ENCODE measurements at regions of chr1 and their contacts with region 1.

Region 1: DNA sequence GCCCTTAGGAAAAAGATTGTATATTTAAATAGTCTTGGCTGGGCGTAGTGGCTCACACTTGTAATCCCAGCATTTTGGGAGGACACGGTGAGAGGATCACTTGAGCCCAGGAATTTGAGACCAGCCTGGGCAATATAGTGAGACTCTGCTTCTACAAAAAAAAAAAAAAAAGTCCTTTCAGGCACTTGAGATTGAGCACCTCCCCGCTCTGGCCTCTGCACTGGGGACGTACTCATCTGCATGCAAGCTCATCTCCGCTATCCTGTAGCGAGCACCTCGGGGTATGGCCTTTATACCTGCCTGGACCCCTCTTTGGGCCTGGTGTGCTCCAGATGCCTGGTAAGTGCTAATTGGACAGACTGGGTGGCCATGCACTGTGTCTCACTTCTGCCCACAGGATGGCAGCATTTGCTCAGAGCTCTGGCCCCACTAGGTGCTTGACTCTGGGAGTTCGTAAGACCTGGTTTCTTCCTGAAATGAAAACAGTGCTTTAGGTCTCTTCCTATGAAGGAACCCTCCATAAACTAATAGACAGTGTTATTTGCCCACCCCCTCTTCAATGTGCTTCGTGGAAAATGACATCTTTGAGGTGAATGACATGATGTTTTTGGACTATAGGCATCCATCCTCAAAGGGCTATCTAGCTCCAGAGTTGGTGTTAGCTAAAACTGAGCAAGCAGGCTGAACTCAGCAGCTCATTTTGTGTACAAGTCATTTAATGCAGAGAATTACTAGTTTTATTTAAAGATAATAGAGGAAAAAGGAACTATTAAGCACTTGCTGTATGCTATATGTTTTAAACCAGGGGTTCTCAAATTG is 61.7 kb upstream of the ADAR start:
- DNase-seq: peak; percentile 67
- ATAC-seq: peak; percentile 100
- H3K4me3 ChIP-seq: no peak overlapping the region
- H3K27ac ChIP-seq: no peak overlapping the region
- H3K4me1 ChIP-seq: no peaks in the 10 kb centered on the region
- H3K27me3 ChIP-seq: no peaks in the 10 kb centered on the region
- CTCF ChIP-seq: peak; percentile 90 to 96 (median 93); a peak in 5 of 6 replicates
- EP300 ChIP-seq: no peak
- POLR2A ChIP-seq: no peak
- RAD21 ChIP-seq: peak; percentile 98

Region 2: GRCh38 chr1:154607609-154608396 is 61.9 kb before region 1 on chr1 and contains the start of gene ADAR:
- CTCF ChIA-PET with region 1: interaction called, 5 read pairs
- POLR2A ChIA-PET with region 1: interaction called, 3 read pairs
- RAD21 ChIA-PET with region 1: interaction called, 11 read pairs
- SMC1A ChIA-PET with region 1: interaction called, 6 read pairs
- in situ Hi-C with region 1: no loop called
- intact Hi-C with region 1: no loop called
- DNase-seq: peak; percentile 89
- ATAC-seq: peak; percentile 74
- H3K4me3 ChIP-seq: peak within 1 kb of the TSS; percentile 80
- H3K27ac ChIP-seq: peak within 1 kb of the TSS; percentile 100
- H3K4me1 ChIP-seq: peaks cover 47% of the 10 kb centered on the region
- H3K27me3 ChIP-seq: no peaks in the 10 kb centered on the region
- CTCF ChIP-seq: 0 out of 6 replicates have a peak, but pooled peaks of 2 of the 3 experiments have one; percentile 4 to 5
- EP300 ChIP-seq: 0 out of 4 replicates have a peak, but pooled peaks of 1 of the 2 experiments have one; percentile 16
- POLR2A ChIP-seq: peak; percentile 84
- RAD21 ChIP-seq: no peak
- polyA plus RNA-seq, gene ADAR: 55.5 to 105 TPM

Region 3: DNA sequence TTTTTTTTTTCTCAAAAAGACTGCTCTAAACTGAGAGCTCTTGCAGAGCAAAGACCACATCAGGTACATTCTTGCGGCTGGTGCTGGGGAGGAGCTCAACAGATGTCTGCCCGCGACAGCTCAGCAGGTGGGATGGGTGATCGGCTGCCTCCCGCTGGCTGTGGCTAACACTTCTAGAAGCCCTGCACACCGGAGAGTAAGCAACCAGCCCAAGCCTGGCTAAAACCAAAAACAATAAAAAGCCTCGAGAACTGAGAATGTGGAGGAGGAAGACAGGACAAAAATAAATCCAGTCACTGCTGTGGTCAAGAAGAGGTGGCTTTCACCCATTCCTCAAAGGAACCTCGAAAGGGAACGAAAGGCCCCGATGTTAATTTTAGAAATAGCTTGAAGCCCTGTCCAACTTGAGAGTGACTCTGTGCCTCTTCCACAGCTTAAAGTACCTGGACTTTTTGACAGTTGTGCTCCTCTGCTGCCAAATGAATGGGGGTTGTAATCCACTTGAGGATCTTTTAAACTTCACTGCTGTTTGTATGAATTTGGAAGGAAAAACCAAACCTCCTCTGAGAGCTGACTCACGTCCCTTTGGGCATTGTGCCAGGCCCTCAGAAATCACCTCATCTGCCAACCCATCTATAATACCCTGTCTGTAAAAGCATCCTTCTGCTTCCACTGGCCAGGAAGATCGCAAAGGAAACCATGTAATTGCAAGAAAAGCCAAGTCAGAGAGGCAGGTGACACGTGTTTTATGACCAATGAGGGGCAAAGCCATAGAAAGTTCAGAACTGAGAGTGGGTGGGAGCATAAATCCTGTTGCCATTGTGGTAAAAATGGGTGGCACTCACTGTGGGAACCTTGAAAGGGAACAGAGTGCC is 121.9 kb after region 1 on chr1:
- CTCF ChIA-PET with region 1: interaction called, 4 read pairs
- POLR2A ChIA-PET with region 1: no interaction called
- RAD21 ChIA-PET with region 1: interaction called, 11 read pairs
- SMC1A ChIA-PET with region 1: interaction called, 4 read pairs
- in situ Hi-C with region 1: no loop called
- intact Hi-C with region 1: no loop called
- DNase-seq: peak; percentile 88
- ATAC-seq: peak; percentile 97
- H3K4me3 ChIP-seq: peak overlapping the region; percentile 49; the same call in 1 of the 2 replicates
- H3K27ac ChIP-seq: peak overlapping the region; percentile 59
- H3K4me1 ChIP-seq: peaks cover 39% of the 10 kb centered on the region
- H3K27me3 ChIP-seq: no peaks in the 10 kb centered on the region
- CTCF ChIP-seq: peak; percentile 39 to 41 (median 40)
- EP300 ChIP-seq: peak; percentile 76 to 77
- POLR2A ChIP-seq: no peak
- RAD21 ChIP-seq: peak; percentile 48

Region 4: DNA sequence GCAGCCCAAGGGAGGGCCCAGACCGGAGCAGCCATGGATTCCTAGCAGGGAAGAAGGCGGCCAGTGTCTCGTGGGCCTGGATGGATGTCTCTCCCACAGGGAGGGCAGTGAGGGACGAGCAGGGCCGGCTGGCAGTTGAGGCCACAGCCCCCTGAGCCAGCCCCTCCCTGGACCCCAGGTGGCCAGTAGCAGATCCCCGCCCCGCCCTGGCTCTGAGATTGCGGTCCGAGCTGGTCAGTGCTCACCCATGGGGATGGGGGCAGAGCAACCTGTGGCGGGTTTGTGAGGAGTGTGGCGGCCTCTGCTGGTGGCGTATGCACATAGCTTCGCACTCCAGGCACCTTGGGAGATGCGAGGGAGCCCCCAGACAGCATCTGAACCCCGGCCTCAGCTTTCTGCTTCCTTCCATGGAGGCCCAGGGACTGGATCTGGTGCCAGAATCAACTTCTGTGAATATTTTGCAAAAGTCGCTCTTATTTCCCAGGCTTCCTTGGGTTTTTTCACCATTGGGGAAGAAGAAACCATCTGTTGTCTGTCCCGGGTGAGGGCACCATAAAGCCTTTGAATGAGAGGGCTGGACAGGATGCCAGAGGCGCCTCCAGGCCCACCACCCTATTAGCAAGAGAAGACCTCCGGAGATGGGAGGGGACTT is 208.8 kb after region 1 on chr1:
- CTCF ChIA-PET with region 1: interaction called, 137 read pairs
- POLR2A ChIA-PET with region 1: interaction called, 6 read pairs
- RAD21 ChIA-PET with region 1: interaction called, 51 read pairs
- SMC1A ChIA-PET with region 1: interaction called, 113 read pairs
- in situ Hi-C with region 1: loop called (anchors 5 kb)
- intact Hi-C with region 1: loop called (anchors 1 kb)
- DNase-seq: no peak
- ATAC-seq: peak; percentile 94
- H3K4me3 ChIP-seq: no peak overlapping the region
- H3K27ac ChIP-seq: no peak overlapping the region
- H3K4me1 ChIP-seq: peaks cover 10% of the 10 kb centered on the region
- H3K27me3 ChIP-seq: no peaks in the 10 kb centered on the region
- CTCF ChIP-seq: peak; percentile 92 to 97 (median 94)
- EP300 ChIP-seq: no peak
- POLR2A ChIP-seq: no peak
- RAD21 ChIP-seq: peak; percentile 96

Region 5: DNA sequence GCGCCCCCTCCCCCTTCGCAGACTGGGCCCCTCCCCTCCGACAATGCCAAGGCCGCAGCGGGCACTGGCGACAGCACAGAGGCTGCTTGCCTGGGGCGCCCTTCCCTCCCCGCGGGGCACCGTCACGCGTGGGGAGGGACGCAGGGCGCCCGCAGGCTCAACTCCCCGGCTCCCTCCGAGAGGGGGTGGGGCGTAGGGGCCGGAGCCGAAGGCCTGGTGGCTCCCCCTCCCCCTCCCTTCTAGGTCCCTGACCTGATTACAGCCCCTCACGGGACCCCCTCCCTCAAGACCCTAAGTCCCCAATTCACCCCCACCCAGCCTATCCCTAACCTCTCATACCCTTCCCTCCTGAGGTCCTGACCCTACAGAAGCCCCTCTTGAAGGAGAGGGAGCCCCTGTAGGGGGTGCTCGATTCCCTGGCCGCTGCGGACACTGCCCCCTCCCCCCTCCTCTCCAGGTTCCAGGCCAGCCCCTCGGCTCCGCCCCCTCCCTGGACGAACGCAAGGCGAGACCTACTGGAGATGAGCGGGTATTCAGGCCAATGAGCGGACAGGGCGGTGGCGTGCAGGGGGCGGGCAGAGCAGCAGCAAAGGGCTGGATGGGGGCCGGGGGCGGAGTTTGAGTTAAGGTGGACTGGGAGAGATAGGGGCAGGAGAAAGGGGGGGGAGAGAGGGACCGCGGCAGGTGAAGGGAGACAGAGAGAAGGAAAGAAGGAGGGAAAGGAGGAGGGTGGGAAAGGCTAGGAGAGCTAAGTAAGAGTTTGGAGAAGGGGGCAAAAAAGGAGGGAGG is 332.2 kb after region 1 on chr1:
- CTCF ChIA-PET with region 1: no interaction called
- POLR2A ChIA-PET with region 1: no interaction called
- RAD21 ChIA-PET with region 1: interaction called, 4 read pairs
- SMC1A ChIA-PET with region 1: interaction called, 4 read pairs
- in situ Hi-C with region 1: no loop called
- intact Hi-C with region 1: loop called (anchors 1 kb)
- DNase-seq: peak; percentile 94
- ATAC-seq: peak; percentile 76
- H3K4me3 ChIP-seq: peak overlapping the region; percentile 98
- H3K27ac ChIP-seq: peak overlapping the region; percentile 79
- H3K4me1 ChIP-seq: peaks cover 39% of the 10 kb centered on the region
- H3K27me3 ChIP-seq: no peaks in the 10 kb centered on the region
- CTCF ChIP-seq: peak; percentile 37 to 53 (median 51); a peak in 5 of 6 replicates
- EP300 ChIP-seq: no peak
- POLR2A ChIP-seq: peak; percentile 1; the same call in 1 of the 2 replicates
- RAD21 ChIP-seq: peak; percentile 32; the same call in 1 of the 2 replicates